Heart left ventricle (tissue), 16 donors: ENCODE measurements at regions of chr16 and their contacts with region 1.

Region 1: GRCh38 chr16:4580245-4580644 is 24.1 kb downstream of the C16orf96 start:
- DNase-seq: no peak
- ATAC-seq: no peak
- H3K4me3 ChIP-seq: no peak overlapping the region
- H3K27ac ChIP-seq: no peak overlapping the region
- H3K4me1 ChIP-seq: no peaks in the 10 kb centered on the region
- H3K27me3 ChIP-seq: no peaks in the 10 kb centered on the region
- CTCF ChIP-seq: no peak
- POLR2A ChIP-seq: no peak

Region 2: DNA sequence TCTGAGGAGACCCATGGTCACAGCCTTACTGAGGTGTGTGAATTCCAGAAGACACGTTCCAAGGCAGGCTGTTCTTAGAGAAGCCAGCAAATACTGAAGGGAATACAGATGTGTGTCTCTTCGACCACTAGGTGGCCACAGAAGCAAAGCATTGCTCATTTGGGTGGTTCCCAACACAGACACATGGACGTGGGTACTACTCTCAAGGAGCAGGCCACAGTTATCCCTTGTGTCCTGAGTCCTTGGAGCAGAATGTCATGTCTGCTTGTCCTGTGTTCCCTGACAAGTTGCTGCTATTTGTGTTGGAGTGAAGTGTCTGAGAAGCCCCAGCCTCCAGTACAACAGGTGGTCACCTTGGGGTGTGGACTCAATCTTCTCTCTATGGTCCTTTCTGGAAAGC is 73.8 kb before region 1 on chr16:
- intact Hi-C with region 1: loop called in 8 of 10 experiments (anchors 2 to 10 kb)
- DNase-seq: peak in 4 of 5 donors; percentile 57 to 66 (median 61)
- ATAC-seq: peak; percentile 69 to 77 (median 70)
- H3K4me3 ChIP-seq: no peak overlapping the region
- H3K27ac ChIP-seq: peak overlapping the region in 3 of 12 donors; percentile 21 to 84 (median 38)
- H3K4me1 ChIP-seq: peaks cover 0 to 51% (median 26%) of the 10 kb centered on the region in 12 donors
- H3K27me3 ChIP-seq: no peaks in the 10 kb centered on the region
- CTCF ChIP-seq: peak; percentile 71 to 87 (median 80)
- POLR2A ChIP-seq: no peak

Region 3: DNA sequence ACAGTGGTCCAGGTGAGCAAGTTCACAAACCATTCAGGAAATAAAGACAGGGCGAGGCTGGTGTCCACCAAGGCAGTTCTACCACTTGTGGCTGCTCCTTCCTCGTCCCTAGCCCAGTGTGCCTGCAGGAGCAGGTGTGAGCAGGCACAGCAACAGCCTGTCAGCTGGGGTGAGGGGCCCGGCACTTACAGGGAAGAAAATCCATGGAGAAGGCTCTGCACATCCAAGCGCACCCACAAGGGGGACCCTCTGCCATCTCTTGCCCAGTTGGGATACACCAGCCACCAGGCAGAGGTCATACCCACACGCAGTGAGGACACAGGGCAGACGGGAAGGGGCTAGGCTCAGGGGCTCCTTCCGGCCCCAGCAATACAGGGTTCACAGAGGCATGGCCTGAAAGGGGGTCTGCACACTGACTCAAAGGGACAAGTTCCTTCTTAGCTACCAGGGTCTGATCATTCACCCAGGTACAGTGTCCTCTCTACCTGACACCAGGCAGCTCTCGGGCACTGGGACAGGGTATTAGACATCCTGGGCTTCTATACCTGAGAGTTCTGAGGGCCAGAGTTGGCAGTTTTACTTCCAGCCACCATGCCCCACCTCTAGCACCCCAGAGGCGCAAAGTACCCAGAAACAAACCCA is 68.7 kb before region 1 on chr16:
- intact Hi-C with region 1: loop called in 8 of 10 experiments (anchors 2 to 10 kb)
- DNase-seq: peak in 4 of 5 donors; percentile 52 to 73 (median 66)
- ATAC-seq: peak; percentile 39 to 71 (median 63)
- H3K4me3 ChIP-seq: no peak overlapping the region
- H3K27ac ChIP-seq: peak overlapping the region in 11 of 12 donors; percentile 14 to 81 (median 60)
- H3K4me1 ChIP-seq: peaks cover 0 to 61% (median 51%) of the 10 kb centered on the region in 12 donors
- H3K27me3 ChIP-seq: no peaks in the 10 kb centered on the region
- CTCF ChIP-seq: peak; percentile 33 to 66 (median 55)
- POLR2A ChIP-seq: no peak

Region 4: DNA sequence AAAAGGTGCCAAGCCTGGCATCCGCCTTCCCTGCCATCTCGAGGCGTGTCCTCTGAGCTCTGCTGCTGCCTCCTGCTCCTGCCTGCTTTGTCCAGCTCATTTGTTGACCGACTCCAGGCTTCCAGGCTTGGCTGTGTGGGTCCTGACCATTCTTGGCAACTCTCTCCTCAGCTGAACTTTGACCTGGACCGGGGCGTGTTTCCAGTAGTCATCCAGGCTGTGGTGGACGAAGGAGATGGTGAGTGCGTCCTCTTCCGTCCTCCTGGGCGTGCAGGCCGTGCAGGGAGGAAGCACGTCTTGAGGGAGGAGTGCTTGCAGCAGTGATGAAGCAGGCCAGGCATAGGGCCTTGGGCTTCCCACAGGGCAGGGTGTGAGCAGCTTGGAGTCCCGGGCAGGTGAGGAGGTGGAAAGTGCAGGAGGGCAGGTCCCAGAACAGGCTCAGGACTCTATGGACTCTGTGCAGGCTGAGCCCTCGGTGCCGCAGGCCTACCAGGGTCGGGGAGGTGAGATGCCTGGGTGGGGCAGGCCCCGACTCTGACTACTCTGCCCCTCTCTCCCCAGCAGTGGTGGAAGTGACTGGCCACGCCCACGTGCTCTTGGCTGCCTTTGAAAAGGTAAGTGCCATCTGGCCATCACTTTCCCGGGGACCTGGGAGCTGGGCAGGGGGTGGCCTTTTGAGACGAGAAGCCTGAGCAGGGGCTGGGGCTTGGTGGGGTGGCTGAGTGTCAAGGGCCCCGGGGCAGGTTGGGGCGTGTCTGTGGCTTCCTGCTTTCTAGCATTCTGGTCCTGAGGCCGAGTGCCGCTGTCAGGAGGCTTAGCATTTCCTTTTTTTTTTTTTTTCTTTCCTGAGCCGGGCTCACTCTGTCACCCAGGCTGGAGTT is 84.5 kb after region 1 on chr16:
- intact Hi-C with region 1: no loop called
- DNase-seq: peak in 3 of 5 donors; percentile 42 to 74 (median 56)
- ATAC-seq: peak in 3 of 4 donors; percentile 46 to 51 (median 50)
- H3K4me3 ChIP-seq: no peak overlapping the region
- H3K27ac ChIP-seq: peak overlapping the region in 4 of 12 donors; percentile 20 to 77 (median 29)
- H3K4me1 ChIP-seq: peaks cover 0 to 45% (median 23%) of the 10 kb centered on the region in 12 donors
- H3K27me3 ChIP-seq: no peaks in the 10 kb centered on the region
- CTCF ChIP-seq: no peak
- POLR2A ChIP-seq: no peak

Region 5: GRCh38 chr16:4814542-4815173 is 234.4 kb after region 1 on chr16:
- intact Hi-C with region 1: no loop called
- DNase-seq: peak in 4 of 5 donors; percentile 33 to 67 (median 52)
- ATAC-seq: peak; percentile 72 to 77 (median 75)
- H3K4me3 ChIP-seq: no peak overlapping the region
- H3K27ac ChIP-seq: peak overlapping the region; percentile 15 to 94 (median 82)
- H3K4me1 ChIP-seq: peaks cover 0 to 20% (median 2%) of the 10 kb centered on the region in 12 donors
- H3K27me3 ChIP-seq: no peaks in the 10 kb centered on the region
- CTCF ChIP-seq: no peak
- POLR2A ChIP-seq: no peak